GM13976 (cell line): ENCODE measurements at regions of chrX and their contacts with region 1.

Region 1: DNA sequence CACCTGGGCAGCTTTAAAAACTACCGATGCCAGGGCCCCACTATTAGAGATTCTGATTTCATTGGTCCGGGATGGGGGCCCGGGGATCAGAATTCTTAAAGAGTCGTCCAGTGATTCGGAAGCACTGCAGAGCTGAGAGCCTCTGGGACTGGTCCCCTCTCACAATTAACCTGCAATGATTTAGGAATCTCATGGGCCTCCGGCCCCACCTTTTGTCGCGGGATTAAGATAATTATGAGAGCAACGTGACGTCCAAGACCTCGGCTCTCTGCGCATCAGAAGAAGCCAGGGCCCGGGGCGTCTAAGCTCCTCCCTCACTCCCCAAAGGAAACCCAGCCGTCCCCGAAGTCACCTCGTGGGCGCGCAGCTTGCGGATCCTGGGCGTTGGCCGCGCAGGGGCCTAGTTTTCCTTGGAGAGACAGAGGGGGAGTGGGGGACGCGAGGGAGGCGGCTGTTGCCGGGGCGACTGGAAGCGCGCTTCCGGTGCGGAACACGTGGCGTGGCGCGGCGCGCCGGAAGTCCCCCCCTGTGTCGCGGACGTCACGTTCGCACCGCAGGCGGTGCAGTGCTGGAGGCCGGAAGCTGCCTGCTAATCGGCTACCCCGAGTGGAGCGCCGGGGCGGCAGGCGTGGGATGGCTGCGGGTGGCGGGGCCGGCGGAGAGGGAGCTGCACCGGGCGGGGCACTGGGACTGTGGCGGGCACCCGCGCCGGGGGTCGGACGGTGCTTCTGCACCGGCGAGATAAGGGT is at the start of gene GEMIN8:
- DNase-seq: peak; percentile 81
- CTCF ChIP-seq: peak; percentile 19

Region 2: DNA sequence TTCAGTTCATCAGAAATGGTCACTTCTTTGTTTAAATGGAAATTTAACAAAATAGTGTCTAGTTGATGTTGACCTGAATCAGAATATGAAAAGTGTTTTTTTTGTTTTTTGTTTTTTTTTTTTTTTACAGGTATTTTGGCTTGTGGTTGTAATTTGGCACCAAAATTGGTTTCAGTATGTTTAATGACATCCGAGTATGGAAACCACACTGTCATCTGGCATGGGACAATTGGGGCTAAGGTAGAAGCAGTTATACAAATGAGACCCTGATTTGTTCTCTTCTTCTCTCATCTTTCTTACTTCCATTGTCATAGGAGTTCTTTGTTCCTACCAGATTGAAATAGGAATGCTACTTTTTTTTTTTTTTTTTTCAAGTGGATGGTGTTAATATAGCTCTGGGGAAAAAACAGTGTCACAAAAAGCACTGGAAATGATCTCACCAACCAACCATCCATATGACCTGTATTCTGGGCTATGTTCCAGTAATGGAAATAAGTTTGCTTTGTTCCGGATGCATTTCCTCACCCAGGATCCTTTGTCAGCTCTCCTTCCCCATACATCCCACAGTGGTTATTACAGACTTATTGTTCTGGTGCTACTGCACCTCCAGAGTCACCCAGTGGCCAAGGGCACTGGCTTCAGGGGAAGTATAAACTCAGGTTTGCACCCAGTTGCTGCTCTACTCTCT is 805.6 kb before region 1 on chrX:
- in situ Hi-C with region 1: no loop called
- DNase-seq: no peak
- CTCF ChIP-seq: no peak

Region 3: GRCh38 chrX:13515211-13515930 is 514.2 kb before region 1 on chrX:
- in situ Hi-C with region 1: loop called (anchors 10 kb)
- DNase-seq: no peak
- CTCF ChIP-seq: no peak

Region 4: DNA sequence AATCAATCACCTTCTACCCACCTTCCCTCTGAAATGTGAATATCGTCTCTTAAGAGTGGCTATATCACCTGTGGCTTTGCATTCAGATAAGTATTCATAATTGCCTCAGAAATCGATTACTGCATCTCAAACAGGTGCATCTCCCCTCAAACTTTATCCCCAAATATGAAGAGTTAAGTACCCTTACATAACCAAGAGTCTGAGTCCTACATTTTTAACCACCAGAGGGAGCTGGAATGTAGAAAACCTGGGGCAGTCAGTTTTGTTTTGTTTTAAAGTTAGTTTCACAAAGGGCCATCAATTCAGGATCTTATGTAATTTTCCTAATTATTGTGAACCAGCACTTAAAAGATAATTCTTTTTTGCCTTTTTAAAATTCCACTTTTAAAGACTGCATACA is 371.0 kb before region 1 on chrX:
- in situ Hi-C with region 1: loop called (anchors 5 kb)
- DNase-seq: peak; percentile 38
- CTCF ChIP-seq: peak; percentile 44

Region 5: GRCh38 chrX:13747836-13748235 is 281.8 kb before region 1 on chrX:
- in situ Hi-C with region 1: loop called (anchors 10 kb)
- DNase-seq: no peak
- CTCF ChIP-seq: no peak

Region 6: GRCh38 chrX:13898083-13898482 is 131.5 kb before region 1 on chrX:
- in situ Hi-C with region 1: loop called (anchors 10 kb)
- DNase-seq: peak; percentile 30
- CTCF ChIP-seq: peak; percentile 16